Colonic mucosa (tissue), 4 donors: ENCODE measurements at regions of chr1 and their contacts with region 1.

Region 1: DNA sequence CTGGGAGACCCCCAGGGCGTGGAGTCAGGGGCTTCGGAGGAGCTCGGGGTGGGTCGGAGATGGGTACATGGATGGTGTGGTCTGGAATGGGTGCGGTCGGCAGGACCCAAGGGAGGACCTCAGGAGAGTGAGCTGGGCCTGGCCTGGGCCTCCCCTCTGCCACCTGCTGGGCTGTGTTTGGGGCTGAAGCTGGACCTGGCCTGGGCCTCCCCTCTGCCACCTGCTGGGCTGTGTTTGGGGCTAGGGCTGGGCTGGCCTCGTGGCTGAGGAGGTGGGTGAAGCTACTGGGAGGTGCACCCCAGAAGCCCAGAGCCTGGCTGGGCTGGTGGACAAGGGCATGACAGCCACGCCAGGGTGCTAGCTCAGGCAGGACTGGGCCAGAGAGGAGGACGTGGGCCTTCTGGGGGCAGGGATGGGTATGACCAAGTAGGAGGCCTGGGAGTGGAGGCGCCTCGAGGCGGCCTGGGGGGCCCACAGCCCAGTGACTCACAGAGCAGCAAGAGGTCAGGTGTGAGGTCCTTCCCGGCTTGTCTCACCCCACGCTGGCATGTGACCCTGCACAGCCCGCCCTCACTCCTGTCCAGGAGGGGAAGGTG is 14.5 kb downstream of the SAMD11 start:
- DNase-seq: peak; percentile 56
- H3K4me3 ChIP-seq: no peak overlapping the region
- H3K27ac ChIP-seq: no peak overlapping the region
- H3K4me1 ChIP-seq: peaks cover 14% of the 10 kb centered on the region
- H3K27me3 ChIP-seq: peaks cover 74% of the 10 kb centered on the region
- CTCF ChIP-seq: peak; percentile 36

Region 2: DNA sequence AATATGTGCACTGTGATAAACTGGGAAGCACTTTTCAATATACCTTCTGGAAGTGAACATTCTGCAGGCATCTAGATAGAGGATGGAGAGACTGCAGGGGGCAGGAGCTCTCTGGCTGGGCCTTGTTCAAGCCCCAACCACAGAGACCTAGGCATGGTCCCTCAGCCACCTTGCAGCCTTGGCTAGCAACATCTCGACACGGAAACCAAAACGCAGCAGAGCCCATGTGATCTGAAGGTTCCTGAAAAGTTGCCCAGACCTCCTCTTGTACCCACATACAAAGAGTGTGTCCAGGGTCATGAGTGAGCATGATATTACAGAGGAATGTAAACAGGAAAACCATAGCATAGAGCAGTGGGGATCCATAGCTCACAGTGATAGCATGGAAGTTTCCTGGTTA is 47.5 kb before region 1 on chr1:
- intact Hi-C with region 1: no loop called
- DNase-seq: no peak
- H3K4me3 ChIP-seq: no peak overlapping the region
- H3K27ac ChIP-seq: no peak overlapping the region
- H3K4me1 ChIP-seq: no peaks in the 10 kb centered on the region
- H3K27me3 ChIP-seq: no peaks in the 10 kb centered on the region
- CTCF ChIP-seq: no peak

Region 3: DNA sequence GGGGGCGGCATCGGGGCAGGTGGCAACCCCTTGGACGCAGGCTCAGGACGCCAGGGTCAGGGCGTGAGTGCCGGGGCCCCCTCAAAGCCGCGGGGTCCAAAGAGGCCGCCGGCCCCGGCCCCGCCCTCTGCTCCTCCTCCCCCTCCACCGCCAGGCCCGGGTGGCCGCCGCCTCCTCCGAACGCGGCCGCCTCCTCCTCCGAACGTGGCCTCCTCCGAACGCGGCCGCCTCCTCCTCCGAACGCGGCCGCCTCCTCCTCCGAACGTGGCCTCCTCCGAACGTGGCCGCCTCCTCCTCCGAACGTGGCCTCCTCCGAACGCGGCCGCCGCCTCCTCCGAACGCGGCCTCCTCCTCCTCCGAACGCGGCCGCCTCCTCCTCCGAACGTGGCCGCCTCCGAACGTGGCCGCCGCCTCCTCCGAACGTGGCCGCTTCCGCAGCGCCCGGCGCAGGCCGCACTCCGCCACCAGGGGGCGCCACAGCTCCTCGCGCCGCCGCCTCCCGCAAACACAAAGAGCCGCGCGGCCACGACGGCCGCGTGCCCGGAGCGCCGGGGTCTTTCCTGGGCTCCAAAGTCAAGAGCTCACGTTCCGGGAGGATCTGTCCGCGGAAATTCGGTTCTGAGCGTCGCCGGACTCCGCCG is 33.8 kb before region 1 on chr1:
- intact Hi-C with region 1: loop called (anchors 2 kb)
- DNase-seq: peak; percentile 78
- H3K4me3 ChIP-seq: peak overlapping the region; percentile 34
- H3K27ac ChIP-seq: no peak overlapping the region
- H3K4me1 ChIP-seq: peaks cover 10% of the 10 kb centered on the region
- H3K27me3 ChIP-seq: peaks cover 12% of the 10 kb centered on the region
- CTCF ChIP-seq: peak; percentile 87

Region 4: GRCh38 chr1:1079408-1080121 is 141.4 kb after region 1 on chr1:
- intact Hi-C with region 1: no loop called
- DNase-seq: peak; percentile 65
- H3K4me3 ChIP-seq: peak overlapping the region; percentile 20
- H3K27ac ChIP-seq: no peak overlapping the region
- H3K4me1 ChIP-seq: peaks cover 10% of the 10 kb centered on the region
- H3K27me3 ChIP-seq: no peaks in the 10 kb centered on the region
- CTCF ChIP-seq: no peak